ENCODE measurements at regions of chr2 and their contacts with region 1.

Region 1: GRCh38 chr2:70301344-70302194 is at the start of gene FAM136A:
- DNase-seq: peak; percentile 11
- H3K4me3 ChIP-seq: peak within 1 kb of the TSS; percentile 83
- H3K27ac ChIP-seq: peak within 1 kb of the TSS; percentile 11
- H3K27me3 ChIP-seq: peaks cover 2% of the 10 kb centered on the region
- CTCF ChIP-seq: peak; percentile 77
- polyA plus RNA-seq, gene FAM136A: 25.8 and 34.1 TPM in 2 replicates

Region 2: GRCh38 chr2:70321370-70321769 is 19.8 kb after region 1 on chr2:
- CTCF ChIA-PET with region 1: interaction called, 17 read pairs
- POLR2A ChIA-PET with region 1: no interaction called
- DNase-seq: no peak
- H3K4me3 ChIP-seq: no peak overlapping the region
- H3K27ac ChIP-seq: no peak overlapping the region
- H3K27me3 ChIP-seq: peaks cover 10% of the 10 kb centered on the region
- CTCF ChIP-seq: no peak

Region 3: DNA sequence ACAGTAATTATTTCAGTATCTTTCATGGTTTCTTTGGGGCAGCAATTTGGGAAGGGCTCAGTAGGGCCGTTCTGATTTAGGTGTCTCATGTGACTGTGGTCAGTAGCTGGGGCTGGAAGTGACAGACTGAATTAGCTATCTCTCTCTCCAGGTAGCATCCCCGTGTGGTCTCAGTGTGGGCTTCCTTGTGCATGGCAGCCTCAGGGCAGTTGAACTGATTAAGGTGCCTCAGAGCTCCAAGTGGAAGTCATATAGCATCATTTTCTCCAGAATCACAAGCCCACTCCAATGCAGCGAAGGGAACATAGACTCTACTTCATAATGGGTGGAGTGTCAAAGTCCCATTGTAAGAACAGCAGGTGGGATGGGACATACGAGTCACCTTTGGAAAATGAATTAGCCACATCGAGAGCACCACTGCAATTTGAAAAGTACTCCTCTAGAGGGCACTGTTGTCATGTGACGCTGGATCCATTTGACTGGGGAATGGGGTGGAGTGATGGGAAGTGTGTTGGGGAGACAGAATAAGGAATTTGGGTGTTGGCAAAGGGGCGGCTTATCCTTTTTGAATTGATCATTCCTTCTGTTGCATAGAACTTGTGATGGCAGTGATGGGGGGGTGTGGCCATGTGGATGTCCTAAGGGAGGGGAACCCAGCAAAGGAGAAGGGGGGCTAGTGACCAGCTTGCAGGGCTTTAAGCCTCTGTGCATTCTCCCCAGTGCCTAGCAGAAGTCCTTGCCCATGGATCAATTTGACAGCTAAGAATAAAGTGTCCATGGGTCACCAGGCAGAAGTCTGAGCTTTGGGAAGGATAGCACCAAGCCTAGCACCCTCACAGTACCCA is 39.6 kb after region 1 on chr2:
- CTCF ChIA-PET with region 1: interaction called, 17 read pairs
- POLR2A ChIA-PET with region 1: no interaction called
- DNase-seq: no peak
- H3K4me3 ChIP-seq: no peak overlapping the region
- H3K27ac ChIP-seq: no peak overlapping the region
- H3K27me3 ChIP-seq: peaks cover 9% of the 10 kb centered on the region
- CTCF ChIP-seq: peak; percentile 74

Region 4: DNA sequence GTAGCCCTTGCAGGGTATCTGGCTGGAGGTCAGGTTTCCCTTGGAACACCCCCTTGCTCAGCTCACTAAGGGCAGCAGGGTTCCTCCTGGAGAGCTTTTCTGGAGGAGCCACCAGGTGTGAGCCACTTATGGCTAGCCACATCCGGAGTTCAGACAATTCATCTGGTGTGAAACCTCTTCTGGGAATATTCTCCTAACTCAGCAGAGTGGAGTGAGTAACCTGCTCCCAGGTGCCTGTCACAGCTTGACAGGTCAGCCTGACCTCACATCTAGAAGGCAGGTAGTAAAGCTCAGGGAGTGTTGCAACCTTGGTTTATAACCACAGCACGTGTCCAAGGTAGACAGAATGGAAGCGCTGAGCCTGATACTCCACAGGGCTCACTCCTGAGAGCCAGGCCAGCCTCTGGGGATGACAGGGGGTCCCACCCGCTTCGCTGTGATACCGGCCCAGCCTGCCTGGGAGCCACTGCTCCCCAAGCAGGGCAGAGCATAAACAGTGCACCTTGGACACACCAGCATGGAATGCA is 314.7 kb after region 1 on chr2:
- CTCF ChIA-PET with region 1: interaction called, 274 read pairs
- POLR2A ChIA-PET with region 1: no interaction called
- DNase-seq: no peak
- H3K4me3 ChIP-seq: no peak overlapping the region
- H3K27ac ChIP-seq: no peak overlapping the region
- H3K27me3 ChIP-seq: peaks cover 2% of the 10 kb centered on the region
- CTCF ChIP-seq: no peak

Region 5: GRCh38 chr2:70647873-70648481 is 346.4 kb after region 1 on chr2:
- CTCF ChIA-PET with region 1: interaction called, 83 read pairs
- POLR2A ChIA-PET with region 1: no interaction called
- DNase-seq: peak; percentile 11
- H3K4me3 ChIP-seq: no peak overlapping the region
- H3K27ac ChIP-seq: no peak overlapping the region
- H3K27me3 ChIP-seq: peaks cover 5% of the 10 kb centered on the region
- CTCF ChIP-seq: peak; percentile 100

Region 6: GRCh38 chr2:70655786-70656185 is 354.2 kb after region 1 on chr2:
- CTCF ChIA-PET with region 1: interaction called, 14 read pairs
- POLR2A ChIA-PET with region 1: no interaction called
- DNase-seq: no peak
- H3K4me3 ChIP-seq: no peak overlapping the region
- H3K27ac ChIP-seq: no peak overlapping the region
- H3K27me3 ChIP-seq: peaks cover 6% of the 10 kb centered on the region
- CTCF ChIP-seq: no peak

Measured in AG04450 (cell line).